ENCODE measurements at regions of chr7 and their contacts with region 1.

Region 1: DNA sequence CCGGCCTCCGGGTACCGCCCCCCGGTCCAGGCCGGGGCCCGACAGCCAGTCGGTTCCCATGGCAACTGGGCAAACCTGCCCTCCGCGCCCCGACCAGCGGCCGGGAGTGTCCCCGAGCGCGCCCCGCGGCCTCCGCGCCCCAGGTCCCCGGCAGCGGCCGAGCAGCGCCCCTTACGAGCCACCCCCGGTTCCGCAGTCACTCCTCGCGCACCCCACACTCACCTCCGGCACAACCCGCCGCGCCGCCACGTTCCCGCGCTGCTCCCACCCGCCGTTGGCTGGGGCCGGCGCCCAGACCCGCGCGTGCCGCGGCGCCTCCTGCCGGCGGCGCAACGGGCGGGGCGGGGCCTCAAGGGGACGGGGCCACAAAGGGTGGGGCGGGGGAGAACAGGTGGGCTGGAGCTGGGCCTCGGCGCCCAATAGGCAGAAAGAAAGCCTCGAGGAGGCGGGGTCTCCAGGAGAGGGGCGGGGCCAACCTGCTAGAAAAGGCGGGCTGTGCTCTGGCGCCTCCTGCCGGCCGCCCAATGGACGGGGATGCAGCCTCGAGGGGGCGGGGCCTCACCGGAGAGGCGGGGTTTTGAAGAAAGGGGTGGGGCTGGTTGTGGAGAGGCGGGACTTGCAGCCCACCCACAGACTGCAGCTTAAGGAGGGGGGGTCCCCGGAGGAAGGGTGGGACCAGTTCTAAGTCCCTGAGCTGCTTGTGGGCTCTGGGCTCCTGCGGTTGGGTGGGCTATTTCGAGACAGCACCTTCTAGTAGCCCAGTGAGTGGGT is at the start of gene RADIL:
- DNase-seq: peak; percentile 93 to 96
- ATAC-seq: peak; percentile 91 to 94 (median 91)
- H3K4me3 ChIP-seq: peak within 1 kb of the TSS; percentile 67
- H3K27ac ChIP-seq: peak within 1 kb of the TSS; percentile 68
- H3K4me1 ChIP-seq: peaks cover 8% of the 10 kb centered on the region
- H3K27me3 ChIP-seq: peaks cover 0 to 33% (median 0%) of the 10 kb centered on the region in 3 donors
- CTCF ChIP-seq: peak; percentile 67
- total RNA-seq, gene RADIL: 2.3 to 3.7 (median 2.8) TPM

Region 2: DNA sequence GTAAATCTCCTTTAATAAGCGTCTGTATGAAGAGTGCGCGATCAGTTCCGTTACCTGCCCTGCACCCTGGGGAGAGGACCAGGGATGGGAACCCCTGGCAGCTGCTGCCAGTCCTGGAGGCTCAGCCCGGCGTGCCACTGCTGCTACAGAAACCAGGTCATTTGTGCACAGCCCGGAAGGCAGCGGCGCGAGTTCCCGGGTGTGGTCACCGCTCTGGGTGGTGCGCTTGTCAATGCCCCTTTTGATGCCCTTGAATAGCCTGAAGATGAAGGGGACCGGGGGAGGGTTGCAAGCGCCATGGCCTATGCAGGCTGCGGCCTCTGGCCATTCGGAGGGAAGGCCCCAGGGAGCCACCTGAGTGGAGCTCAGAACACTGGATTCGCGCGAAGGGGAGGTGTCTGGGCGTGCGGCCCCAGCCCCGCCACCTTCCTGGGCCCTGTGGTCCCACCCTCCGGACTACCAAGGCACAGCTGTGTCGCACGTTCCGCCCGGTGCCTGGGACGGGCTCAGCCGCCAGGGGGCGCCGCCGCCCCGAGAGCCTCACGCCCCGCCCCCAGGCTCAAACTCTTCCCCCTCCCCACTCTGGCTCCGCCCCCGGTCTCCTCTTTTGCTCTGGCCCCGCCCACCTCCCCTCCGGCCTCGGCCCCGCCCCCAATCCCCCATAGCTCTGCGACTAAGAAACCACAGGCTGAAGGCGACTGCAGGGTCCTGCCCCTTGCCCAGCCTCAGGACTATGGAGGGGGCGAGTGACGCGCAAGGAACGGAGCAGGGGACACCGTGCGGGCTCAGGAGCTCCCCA is 91.6 kb before region 1 on chr7:
- intact Hi-C with region 1: loop called in 1 of 2 experiments (anchors 5 kb)
- DNase-seq: peak; percentile 74 to 92
- ATAC-seq: peak; percentile 71 to 93 (median 85)
- H3K4me3 ChIP-seq: peak overlapping the region; percentile 61
- H3K27ac ChIP-seq: peak overlapping the region; percentile 4
- H3K4me1 ChIP-seq: peaks cover 6% of the 10 kb centered on the region
- H3K27me3 ChIP-seq: no peaks in the 10 kb centered on the region
- CTCF ChIP-seq: peak; percentile 79

Region 3: GRCh38 chr7:5117095-5117970 is 233.8 kb after region 1 on chr7:
- intact Hi-C with region 1: no loop called
- DNase-seq: no peak
- ATAC-seq: no peak
- H3K4me3 ChIP-seq: no peak overlapping the region
- H3K27ac ChIP-seq: no peak overlapping the region
- H3K4me1 ChIP-seq: no peaks in the 10 kb centered on the region
- H3K27me3 ChIP-seq: peaks cover 0 to 1% (median 0%) of the 10 kb centered on the region in 3 donors
- CTCF ChIP-seq: no peak